Vagina (tissue), 2 donors: ENCODE measurements at regions of chr11 and their contacts with region 1.

Region 1: DNA sequence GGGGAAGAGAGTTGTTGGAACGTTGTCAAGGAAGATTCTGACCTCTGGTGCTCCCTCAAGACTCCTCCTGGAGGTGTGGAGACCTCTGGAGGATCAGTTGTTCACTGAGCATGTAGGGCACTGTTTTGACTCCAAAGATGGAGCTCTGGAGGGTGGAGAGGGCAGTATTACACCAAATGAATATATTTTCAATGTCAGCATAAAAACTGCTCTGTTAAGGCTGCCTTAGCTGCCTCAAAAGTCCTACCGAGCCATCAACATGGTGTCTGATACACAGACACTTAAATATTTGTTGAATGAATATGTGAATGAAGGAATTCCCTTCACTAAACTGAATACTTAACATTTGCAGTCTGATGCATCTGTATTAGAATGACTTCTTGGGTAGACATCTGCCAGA is 144.2 kb upstream of the SPON1 start:
- DNase-seq: no peak
- H3K4me3 ChIP-seq: no peak overlapping the region
- H3K27ac ChIP-seq: no peak overlapping the region
- H3K4me1 ChIP-seq: no peaks in the 10 kb centered on the region
- H3K27me3 ChIP-seq: no peaks in the 10 kb centered on the region
- CTCF ChIP-seq: no peak
- POLR2A ChIP-seq: no peak

Region 2: DNA sequence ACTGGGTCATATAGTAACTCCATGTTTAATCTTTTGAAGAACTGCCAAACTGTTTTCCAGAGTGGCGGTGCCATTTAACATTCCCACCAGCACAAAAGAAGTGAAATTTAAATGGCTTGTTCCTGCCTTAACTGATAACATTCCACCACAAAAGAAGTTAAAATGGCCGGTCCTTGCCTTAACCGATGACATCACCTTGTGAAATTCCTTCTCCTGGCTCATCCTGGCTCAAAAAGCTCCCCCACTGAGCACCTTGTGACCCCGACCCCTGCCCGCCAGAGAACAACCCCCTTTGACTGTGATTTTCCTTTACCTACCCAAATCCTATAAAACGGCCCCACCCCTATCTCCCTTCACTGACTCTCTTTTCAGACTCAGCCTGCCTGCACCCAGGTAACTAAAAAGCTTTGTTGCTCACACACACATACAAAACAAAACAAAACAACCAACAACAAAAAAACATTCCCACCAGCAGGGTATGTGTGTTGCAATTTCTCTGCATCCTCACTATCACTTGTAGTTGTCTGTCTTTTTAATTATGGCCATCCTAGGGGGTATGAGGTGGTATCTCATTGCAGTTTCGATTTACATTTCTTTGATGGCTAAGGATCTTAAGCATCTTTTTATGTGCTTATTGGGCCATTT is 40.9 kb before region 1 on chr11:
- intact Hi-C with region 1: loop called (anchors 1 kb)
- DNase-seq: no peak
- H3K4me3 ChIP-seq: no peak overlapping the region
- H3K27ac ChIP-seq: no peak overlapping the region
- H3K4me1 ChIP-seq: no peaks in the 10 kb centered on the region
- H3K27me3 ChIP-seq: no peaks in the 10 kb centered on the region
- CTCF ChIP-seq: no peak
- POLR2A ChIP-seq: no peak

Region 3: DNA sequence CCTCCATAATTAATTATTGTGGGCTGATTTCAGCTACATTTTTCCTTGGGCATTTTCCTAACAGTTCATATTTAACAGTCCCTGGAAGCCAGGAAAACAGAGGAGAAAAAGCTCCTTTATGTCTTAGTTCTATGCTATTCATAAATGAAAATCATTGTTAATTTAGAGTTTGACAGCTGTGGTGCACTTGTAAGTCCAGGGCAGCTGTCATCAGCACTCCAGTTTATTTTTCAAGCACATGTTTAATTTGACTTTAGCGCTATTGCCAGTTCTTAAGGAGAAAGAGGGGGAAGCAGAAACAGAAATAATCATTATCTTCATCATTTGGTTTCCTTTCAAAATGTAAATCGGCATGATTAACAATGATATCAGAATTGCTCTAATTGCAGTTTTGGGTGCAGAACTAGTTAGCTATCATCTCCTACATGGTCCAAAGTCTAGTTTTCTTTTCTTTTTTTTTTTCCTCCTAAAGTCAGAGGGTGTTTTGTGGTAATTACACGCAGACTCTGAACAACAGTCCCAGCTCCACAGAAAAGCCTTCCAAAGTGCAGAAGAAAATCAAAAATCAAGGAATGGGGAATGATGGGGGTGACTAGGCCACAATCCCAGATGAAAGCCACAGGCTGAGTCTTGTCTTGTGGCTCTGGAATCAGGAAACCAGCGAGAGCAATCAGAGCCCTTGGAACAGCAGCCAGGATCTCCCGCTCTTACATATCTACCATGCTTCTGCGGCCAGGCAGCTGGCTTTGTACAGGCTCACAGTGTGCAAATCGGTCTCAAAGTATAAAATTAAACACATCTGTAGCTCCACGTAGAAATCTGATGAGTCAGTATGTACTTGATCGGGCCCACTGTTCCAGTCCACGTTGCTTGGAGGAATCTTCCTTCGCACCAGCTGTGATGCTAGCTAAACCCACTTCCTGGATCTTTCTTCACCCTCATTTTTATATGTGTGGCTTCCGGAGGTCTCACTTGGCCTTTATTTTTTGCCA is 236.1 kb after region 1 on chr11:
- intact Hi-C with region 1: no loop called
- DNase-seq: no peak
- H3K4me3 ChIP-seq: no peak overlapping the region
- H3K27ac ChIP-seq: no peak overlapping the region
- H3K4me1 ChIP-seq: no peaks in the 10 kb centered on the region
- H3K27me3 ChIP-seq: no peaks in the 10 kb centered on the region
- CTCF ChIP-seq: no peak
- POLR2A ChIP-seq: no peak